Motor neuron (in vitro differentiated cells): ENCODE measurements at regions of chr17 and their contacts with region 1.

Region 1: GRCh38 chr17:43393944-43394482 is 4.8 kb upstream of the ARL4D start:
- ATAC-seq: peak; percentile 21 to 51 (median 42)
- H3K4me3 ChIP-seq: no peak overlapping the region
- H3K27ac ChIP-seq: no peak overlapping the region
- H3K4me1 ChIP-seq: peaks cover 0 to 5% of the 10 kb centered on the region in 2 donors

Region 2: DNA sequence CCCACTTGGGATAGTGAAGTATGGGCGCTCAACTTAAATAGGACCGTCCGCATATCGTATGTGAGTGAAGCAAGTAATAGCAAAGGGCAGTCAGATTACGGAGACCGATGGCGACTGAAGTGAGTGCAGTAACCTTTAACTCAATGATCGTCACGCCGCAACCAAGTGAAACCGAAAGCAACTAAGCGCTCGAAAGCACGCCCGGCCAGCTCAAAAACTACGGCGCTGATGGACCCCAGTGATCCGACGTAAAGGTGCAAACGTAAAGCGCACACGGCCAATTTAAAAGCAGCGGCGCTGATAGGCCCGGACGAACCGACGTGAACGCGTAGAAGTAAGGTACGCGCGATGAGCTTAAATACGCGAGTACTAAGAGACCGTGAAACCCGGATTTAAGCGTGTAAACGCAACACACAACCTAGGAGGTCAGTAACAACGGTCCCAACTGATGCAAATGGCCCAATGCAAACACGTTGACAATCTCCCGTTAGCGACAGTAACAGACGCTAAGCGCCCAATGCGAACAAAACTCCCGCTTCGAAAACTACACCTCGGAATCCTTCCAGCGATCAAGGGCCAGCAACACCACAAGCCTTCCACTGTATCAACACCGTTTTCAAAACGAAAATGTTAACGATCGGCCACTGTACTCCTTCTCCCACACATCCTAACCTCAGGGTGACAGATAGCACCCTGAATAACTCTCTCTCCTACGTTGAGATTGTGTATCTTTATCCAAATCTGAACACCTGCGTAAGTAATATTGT is 33.1 kb before region 1 on chr17:
- in situ Hi-C with region 1: no loop called
- ATAC-seq: peak in 7 of 8 experiments; percentile 9 to 86 (median 77)
- H3K4me3 ChIP-seq: peak overlapping the region in 4 of 5 donors; percentile 13 to 36 (median 33)
- H3K27ac ChIP-seq: peak overlapping the region in 1 of 2 donors; percentile 100
- H3K4me1 ChIP-seq: peaks cover 0 to 14% of the 10 kb centered on the region in 2 donors

Region 3: GRCh38 chr17:43477832-43478634 is 84.0 kb after region 1 on chr17:
- in situ Hi-C with region 1: loop called in 8 of 9 experiments (anchors 5 to 10 kb)
- ATAC-seq: peak; percentile 79 to 95 (median 94)
- H3K4me3 ChIP-seq: no peak overlapping the region
- H3K27ac ChIP-seq: no peak overlapping the region
- H3K4me1 ChIP-seq: peaks cover 12 to 14% of the 10 kb centered on the region in 2 donors

Region 4: DNA sequence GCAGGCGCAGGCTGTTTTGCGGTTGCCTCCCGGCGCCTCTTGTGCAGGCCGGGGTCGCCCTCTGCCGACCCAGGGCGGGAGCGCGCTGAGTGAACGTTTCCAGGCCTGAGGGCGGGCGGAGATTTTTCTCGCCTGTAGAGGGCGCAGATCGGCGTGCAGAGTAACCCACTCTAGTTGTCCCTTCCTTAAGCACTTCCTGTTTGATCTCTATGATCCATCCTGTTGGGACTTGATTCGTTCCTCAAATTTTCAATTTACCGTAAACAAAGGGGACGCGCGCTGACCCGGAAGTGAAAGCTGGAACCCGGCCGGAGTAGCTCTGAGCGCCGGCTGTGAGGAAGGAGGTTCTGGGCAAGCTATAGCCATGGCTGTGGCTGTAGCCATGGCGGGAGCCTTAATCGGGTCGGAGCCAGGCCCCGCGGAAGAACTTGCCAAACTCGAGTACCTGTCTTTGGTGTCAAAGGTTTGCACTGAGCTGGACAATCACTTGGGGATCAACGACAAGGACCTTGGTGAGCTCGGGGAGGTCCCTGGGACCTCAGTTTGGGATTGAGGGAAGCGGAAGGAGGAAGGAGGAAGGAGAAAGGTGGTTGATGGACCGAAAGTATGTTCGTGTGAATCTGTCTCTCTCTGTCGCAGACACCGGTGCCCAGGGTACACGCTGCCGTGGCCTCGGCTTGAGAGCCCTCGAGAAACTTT is 89.8 kb after region 1 on chr17 and contains the start of gene DHX8:
- in situ Hi-C with region 1: loop called in 8 of 9 experiments (anchors 5 to 10 kb)
- ATAC-seq: peak; percentile 88 to 99 (median 99)
- H3K4me3 ChIP-seq: peak within 1 kb of the TSS; percentile 52 to 75 (median 61)
- H3K27ac ChIP-seq: peak within 1 kb of the TSS; percentile 60 to 74
- H3K4me1 ChIP-seq: peaks cover 9% of the 10 kb centered on the region in 2 donors
- total RNA-seq, gene DHX8: 16.9 to 54.2 (median 33.9) TPM